ENCODE measurements at regions of chr9 and their contacts with region 1.

Region 1: DNA sequence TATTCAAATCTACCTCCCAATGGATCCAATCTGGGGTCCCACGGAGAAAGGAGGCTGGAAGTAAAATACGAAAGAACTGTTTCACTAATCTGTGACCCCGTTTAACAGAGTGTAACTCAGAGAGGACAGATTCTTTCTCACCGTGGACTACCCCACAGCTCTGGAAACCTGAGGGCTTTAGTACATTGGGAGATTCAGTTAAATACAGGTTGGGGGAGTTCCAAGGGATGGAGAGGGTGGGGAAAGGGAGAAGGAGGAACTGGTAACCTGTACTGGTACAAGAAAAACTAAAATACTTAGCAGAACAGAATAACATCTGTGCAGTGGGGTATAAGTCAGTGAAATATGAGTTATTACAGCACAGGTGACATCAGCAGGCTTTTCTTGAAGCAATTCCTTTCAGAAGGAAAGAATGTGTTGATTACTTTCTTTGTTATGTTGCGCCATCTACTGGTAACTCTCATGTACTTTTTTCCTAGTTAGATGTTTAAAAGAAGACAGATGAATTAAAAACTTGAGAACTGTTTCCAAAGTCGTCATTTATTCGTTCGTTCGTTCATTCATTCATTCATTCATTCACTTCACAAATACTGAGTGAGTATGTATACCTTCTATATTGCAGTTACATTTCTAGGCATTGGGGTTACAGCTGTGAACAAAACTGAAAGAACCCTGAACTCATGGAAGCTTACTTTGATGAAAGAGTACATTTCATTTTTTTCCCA is 30.0 kb upstream of the STOM start:
- DNase-seq: peak in 2 of 5 donors; percentile 80 to 85
- H3K4me3 ChIP-seq: no peak overlapping the region
- H3K27ac ChIP-seq: no peak overlapping the region
- H3K4me1 ChIP-seq: no peaks in the 10 kb centered on the region
- H3K27me3 ChIP-seq: no peaks in the 10 kb centered on the region
- CTCF ChIP-seq: peak; percentile 64

Region 2: DNA sequence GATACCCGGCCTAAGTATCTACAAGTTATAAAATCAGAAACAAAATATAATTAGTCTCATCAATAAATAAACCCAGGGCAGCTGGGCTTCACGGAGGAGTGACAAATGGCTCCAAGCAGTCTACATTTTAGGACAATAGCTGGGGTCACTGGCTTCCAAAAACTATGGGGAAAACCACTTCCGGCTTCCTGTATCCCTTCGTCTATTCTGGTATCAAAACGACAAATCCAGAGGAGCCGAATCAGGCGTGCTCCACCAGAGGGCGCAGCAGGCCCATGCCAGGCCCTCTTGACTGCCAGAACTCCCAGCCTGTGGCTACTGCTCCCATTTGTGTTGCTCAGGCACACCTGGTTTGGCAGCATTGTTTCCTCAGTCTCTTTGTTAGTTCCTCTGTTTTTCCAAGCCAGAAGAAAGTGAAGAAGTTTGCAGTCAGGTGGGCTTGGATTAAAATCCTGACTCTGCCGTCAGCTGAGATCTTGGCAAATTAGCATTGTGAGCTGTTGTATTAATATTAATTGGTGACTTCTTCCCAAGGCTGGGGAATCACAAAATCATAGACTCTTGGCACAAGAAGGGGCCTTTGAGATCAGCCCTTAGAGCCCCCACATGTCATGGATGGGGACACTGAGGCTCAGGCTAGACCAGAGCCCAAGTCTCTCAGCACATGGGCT is 186.8 kb before region 1 on chr9:
- intact Hi-C with region 1: loop called (anchors 10 kb)
- DNase-seq: peak; percentile 92 to 95 (median 92)
- H3K4me3 ChIP-seq: no peak overlapping the region
- H3K27ac ChIP-seq: no peak overlapping the region
- H3K4me1 ChIP-seq: no peaks in the 10 kb centered on the region
- H3K27me3 ChIP-seq: no peaks in the 10 kb centered on the region
- CTCF ChIP-seq: peak; percentile 98